CD4-positive, alpha-beta memory T cell (primary cell): ENCODE measurements at regions of chr17 and their contacts with region 1.

Region 1: GRCh38 chr17:7056386-7056785 is 12.5 kb upstream of the SLC16A11 start:
- DNase-seq: no peak
- H3K4me3 ChIP-seq: no peak overlapping the region
- H3K4me3 Mint-ChIP-seq: no peak overlapping the region
- H3K27ac ChIP-seq: no peak overlapping the region
- H3K27ac Mint-ChIP-seq: no peak overlapping the region
- H3K4me1 ChIP-seq: no peaks in the 10 kb centered on the region
- H3K4me1 Mint-ChIP-seq: peaks cover 1 to 5% (median 3%) of the 10 kb centered on the region in 4 donors
- H3K27me3 ChIP-seq: no peaks in the 10 kb centered on the region
- H3K27me3 Mint-ChIP-seq: peaks cover 0 to 2% of the 10 kb centered on the region in 2 donors

Region 2: GRCh38 chr17:7029659-7030058 is 26.7 kb before region 1 on chr17:
- CTCF ChIA-PET with region 1: no interaction called
- POLR2A ChIA-PET with region 1: no interaction called
- intact Hi-C with region 1: no loop called
- DNase-seq: peak; percentile 35 to 71 (median 41)
- H3K4me3 ChIP-seq: peak overlapping the region in 1 of 2 donors; percentile 38
- H3K4me3 Mint-ChIP-seq: peak overlapping the region; percentile 64 to 87 (median 80)
- H3K27ac ChIP-seq: peak overlapping the region; percentile 44
- H3K27ac Mint-ChIP-seq: peak overlapping the region; percentile 77 to 96 (median 92)
- H3K4me1 ChIP-seq: peaks cover 51% of the 10 kb centered on the region
- H3K4me1 Mint-ChIP-seq: peaks cover 30 to 62% (median 41%) of the 10 kb centered on the region in 4 donors
- H3K27me3 ChIP-seq: no peaks in the 10 kb centered on the region
- H3K27me3 Mint-ChIP-seq: no peaks in the 10 kb centered on the region

Region 3: GRCh38 chr17:7177196-7177953 is 121.0 kb after region 1 on chr17:
- CTCF ChIA-PET with region 1: interaction called, 8 read pairs
- POLR2A ChIA-PET with region 1: no interaction called
- intact Hi-C with region 1: loop called (anchors 1 kb)
- DNase-seq: peak; percentile 57 to 67 (median 60)
- H3K4me3 ChIP-seq: no peak overlapping the region
- H3K4me3 Mint-ChIP-seq: peak overlapping the region; percentile 66 to 78 (median 68)
- H3K27ac ChIP-seq: no peak overlapping the region
- H3K27ac Mint-ChIP-seq: peak overlapping the region in 4 of 7 donors; percentile 32 to 84 (median 48)
- H3K4me1 ChIP-seq: peaks cover 25% of the 10 kb centered on the region
- H3K4me1 Mint-ChIP-seq: peaks cover 7 to 12% (median 8%) of the 10 kb centered on the region in 4 donors
- H3K27me3 ChIP-seq: peaks cover 18% of the 10 kb centered on the region
- H3K27me3 Mint-ChIP-seq: peaks cover 8 to 11% of the 10 kb centered on the region in 2 donors